ENCODE measurements at regions of chr12 and their contacts with region 1.

Region 1: GRCh38 chr12:76820888-76821482 is 57.1 kb downstream of the ZDHHC17 start:
- DNase-seq: peak in 1 of 2 experiments; percentile 7
- H3K4me3 ChIP-seq: no peak overlapping the region
- H3K27ac ChIP-seq: no peak overlapping the region
- H3K4me1 ChIP-seq: no peaks in the 10 kb centered on the region
- H3K27me3 ChIP-seq: no peaks in the 10 kb centered on the region
- CTCF ChIP-seq: peak; percentile 56

Region 2: GRCh38 chr12:76757694-76758093 is 63.3 kb before region 1 on chr12:
- CTCF ChIA-PET with region 1: no interaction called
- POLR2A ChIA-PET with region 1: no interaction called
- intact Hi-C with region 1: no loop called
- DNase-seq: no peak
- H3K4me3 ChIP-seq: no peak overlapping the region
- H3K27ac ChIP-seq: no peak overlapping the region
- H3K4me1 ChIP-seq: no peaks in the 10 kb centered on the region
- H3K27me3 ChIP-seq: no peaks in the 10 kb centered on the region
- CTCF ChIP-seq: no peak

Region 3: GRCh38 chr12:77231501-77231918 is 410.5 kb after region 1 on chr12:
- CTCF ChIA-PET with region 1: no interaction called
- POLR2A ChIA-PET with region 1: interaction called, 10 read pairs
- intact Hi-C with region 1: no loop called
- DNase-seq: peak in 1 of 2 experiments; percentile 44
- H3K4me3 ChIP-seq: no peak overlapping the region
- H3K27ac ChIP-seq: no peak overlapping the region
- H3K4me1 ChIP-seq: no peaks in the 10 kb centered on the region
- H3K27me3 ChIP-seq: no peaks in the 10 kb centered on the region
- CTCF ChIP-seq: no peak